Activated B cell treated with CpG ODN at 0.5 μM for 24 hours (primary cell): ENCODE measurements at regions of chr1 and their contacts with region 1.

Region 1: DNA sequence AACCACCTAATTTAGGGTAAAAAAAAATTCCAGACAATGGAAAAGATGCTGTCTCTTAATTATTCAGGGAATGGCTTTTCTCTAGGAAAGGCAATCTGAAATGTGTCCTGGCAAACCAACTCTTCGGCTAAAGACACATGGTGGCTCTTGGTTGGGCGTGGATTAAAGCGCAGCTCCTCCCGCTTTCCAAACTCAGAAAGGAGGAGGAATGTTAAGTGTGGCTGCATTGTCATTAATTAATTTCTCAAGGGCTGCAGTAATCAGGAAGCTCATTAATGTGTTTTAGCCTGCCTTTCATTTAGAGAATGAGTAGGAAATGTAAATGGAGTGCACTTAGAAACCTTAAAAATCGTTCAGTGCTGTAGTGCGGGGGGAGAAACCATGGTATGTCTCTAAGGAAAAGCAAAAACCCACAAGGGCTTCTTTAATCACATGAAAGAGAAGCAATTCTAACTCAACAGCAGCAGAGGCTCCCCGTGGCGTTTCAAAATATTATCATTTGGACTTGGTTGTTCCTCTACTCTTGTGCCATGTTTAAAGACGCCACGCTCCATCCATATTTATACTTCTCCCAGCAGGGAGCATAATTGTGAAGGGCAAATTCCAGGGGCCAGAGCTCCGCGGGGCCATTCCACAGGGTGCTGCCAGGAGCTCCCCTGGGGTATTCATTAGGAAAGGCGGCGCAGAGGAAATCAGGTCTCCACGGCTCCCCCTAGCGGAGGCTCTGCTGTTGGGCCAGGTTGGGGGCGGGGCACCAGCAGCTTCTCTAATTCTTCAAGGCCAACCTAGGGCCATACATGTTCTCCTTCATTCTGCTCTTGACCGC is 91.9 kb upstream of the SSX2IP start:
- DNase-seq: peak; percentile 60
- ATAC-seq: peak; percentile 84
- H3K4me3 Mint-ChIP-seq: no peak overlapping the region
- H3K27ac Mint-ChIP-seq: no peak overlapping the region
- H3K4me1 Mint-ChIP-seq: peaks cover 2% of the 10 kb centered on the region
- H3K27me3 Mint-ChIP-seq: peaks cover 6% of the 10 kb centered on the region
- CTCF ChIP-seq: peak; percentile 79

Region 2: DNA sequence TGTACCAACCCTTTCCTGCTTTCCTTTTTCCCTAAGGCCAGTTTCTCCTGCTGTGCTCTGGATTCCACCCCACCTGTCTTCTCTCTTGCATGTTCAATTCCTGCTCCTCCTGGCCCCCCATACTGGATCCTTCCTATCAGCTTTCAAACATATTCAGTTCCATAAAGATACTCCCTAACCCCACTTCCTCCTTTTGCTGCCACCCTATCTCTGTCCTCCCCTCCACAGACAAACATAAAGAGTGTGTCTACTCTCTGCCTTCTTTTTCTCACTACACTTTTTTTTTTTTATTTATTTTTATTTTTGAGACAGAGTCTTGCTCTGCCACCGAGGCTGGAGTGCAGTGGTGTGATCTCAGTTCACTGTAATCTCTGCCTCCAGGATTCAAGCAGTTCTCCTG is 320.0 kb before region 1 on chr1:
- CTCF ChIA-PET with region 1: no interaction called
- POLR2A ChIA-PET with region 1: no interaction called
- intact Hi-C with region 1: no loop called
- DNase-seq: no peak
- ATAC-seq: no peak
- H3K4me3 Mint-ChIP-seq: no peak overlapping the region
- H3K27ac Mint-ChIP-seq: no peak overlapping the region
- H3K4me1 Mint-ChIP-seq: no peaks in the 10 kb centered on the region
- H3K27me3 Mint-ChIP-seq: peaks cover 29% of the 10 kb centered on the region
- CTCF ChIP-seq: no peak

Region 3: DNA sequence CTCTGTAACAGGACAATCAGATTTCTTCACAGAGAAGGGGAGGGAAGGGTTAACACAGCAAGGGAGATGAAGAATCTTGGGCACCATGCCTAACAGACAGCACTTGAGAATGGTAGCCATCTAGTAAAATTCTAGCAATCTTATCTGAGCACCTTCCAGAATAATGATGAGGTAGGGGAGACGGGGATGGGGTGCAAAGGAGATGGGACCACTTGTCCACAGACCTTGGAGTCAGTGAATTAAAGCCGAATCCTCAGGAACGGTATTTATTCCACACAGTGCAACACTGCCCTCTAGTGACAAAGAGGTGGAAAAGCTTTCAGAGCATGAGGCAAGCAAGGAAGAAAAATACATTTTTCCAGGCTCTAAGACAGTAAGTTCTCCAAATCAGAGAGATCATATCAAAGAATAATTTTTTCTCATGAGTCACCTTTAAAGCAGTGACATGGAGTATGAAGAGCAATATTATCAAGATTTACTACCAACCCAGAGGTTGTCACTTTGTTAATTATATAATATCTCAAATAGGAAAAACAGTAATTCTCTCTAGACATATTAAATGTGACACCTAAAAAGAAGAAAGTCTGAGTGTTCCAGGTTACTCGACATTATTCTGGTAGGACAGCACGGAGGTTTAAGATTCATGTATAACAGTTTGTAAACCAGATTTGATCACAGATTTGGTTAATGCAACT is 154.1 kb after region 1 on chr1:
- CTCF ChIA-PET with region 1: interaction called, 3 read pairs
- POLR2A ChIA-PET with region 1: no interaction called
- intact Hi-C with region 1: loop called (anchors 5 kb)
- DNase-seq: no peak
- ATAC-seq: peak; percentile 70
- H3K4me3 Mint-ChIP-seq: no peak overlapping the region
- H3K27ac Mint-ChIP-seq: no peak overlapping the region
- H3K4me1 Mint-ChIP-seq: peaks cover 4% of the 10 kb centered on the region
- H3K27me3 Mint-ChIP-seq: no peaks in the 10 kb centered on the region
- CTCF ChIP-seq: peak; percentile 99